Psoas muscle (tissue), 8 donors: ENCODE measurements at regions of chr10 and their contacts with region 1.

Region 1: DNA sequence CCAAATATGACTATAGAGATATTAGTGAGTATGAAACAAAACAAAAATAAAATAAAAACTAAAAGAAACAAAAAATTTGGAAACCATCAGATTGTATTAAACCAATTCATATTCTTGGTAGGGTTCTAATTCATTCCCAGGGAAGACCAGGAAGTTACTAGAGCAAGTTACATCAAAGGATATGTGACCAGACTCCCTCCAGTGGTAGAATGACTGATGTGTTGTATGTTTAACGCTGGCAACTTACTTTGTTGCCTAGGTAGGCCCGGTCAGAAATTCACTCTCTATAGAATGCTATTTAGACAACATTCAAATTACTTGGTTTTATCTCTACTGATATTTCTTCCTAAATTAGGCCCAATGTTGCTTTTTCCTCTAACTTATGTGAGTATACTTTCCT is 5.2 kb downstream of the PHYHIPL start:
- DNase-seq: no peak
- ATAC-seq: peak in 3 of 4 donors; percentile 37 to 72 (median 42)
- H3K4me3 ChIP-seq: no peak overlapping the region
- H3K27ac ChIP-seq: no peak overlapping the region
- H3K4me1 ChIP-seq: no peaks in the 10 kb centered on the region
- H3K27me3 ChIP-seq: peaks cover 0 to 25% (median 2%) of the 10 kb centered on the region in 3 donors
- CTCF ChIP-seq: peak; percentile 54

Region 2: DNA sequence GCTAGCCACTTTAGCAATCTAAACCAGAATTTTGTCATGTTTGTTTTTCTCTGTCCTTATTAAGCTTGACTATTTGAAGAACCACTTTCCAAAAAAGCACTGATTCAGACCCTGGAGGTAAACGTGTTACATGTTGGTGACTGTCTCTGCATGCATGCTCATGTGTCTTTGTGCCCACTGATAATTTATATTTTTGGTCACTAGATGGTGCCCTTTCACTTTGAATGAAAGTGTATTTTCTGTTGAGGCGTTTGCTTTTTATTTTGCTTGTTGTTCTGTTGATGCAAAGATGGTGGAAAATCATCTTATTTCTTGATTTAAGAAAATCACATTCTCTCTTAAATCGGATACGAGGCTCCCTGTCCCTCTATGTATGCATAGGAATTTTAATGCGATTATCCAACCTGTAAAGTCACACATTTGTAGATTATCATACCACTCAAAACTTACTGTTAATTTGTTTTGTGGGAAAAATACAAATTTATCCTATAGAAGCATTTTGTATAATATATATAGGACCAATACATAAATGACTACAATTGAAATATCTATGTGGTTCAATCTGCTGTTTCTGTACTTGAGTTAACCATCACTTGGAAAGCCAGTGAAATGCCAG is 399.7 kb before region 1 on chr10:
- intact Hi-C with region 1: loop called (anchors 5 to 10 kb)
- DNase-seq: no peak
- ATAC-seq: peak in 3 of 4 donors; percentile 41 to 80 (median 66)
- H3K4me3 ChIP-seq: no peak overlapping the region
- H3K27ac ChIP-seq: peak overlapping the region; percentile 42
- H3K4me1 ChIP-seq: peaks cover 3% of the 10 kb centered on the region
- H3K27me3 ChIP-seq: no peaks in the 10 kb centered on the region
- CTCF ChIP-seq: peak; percentile 63

Region 3: DNA sequence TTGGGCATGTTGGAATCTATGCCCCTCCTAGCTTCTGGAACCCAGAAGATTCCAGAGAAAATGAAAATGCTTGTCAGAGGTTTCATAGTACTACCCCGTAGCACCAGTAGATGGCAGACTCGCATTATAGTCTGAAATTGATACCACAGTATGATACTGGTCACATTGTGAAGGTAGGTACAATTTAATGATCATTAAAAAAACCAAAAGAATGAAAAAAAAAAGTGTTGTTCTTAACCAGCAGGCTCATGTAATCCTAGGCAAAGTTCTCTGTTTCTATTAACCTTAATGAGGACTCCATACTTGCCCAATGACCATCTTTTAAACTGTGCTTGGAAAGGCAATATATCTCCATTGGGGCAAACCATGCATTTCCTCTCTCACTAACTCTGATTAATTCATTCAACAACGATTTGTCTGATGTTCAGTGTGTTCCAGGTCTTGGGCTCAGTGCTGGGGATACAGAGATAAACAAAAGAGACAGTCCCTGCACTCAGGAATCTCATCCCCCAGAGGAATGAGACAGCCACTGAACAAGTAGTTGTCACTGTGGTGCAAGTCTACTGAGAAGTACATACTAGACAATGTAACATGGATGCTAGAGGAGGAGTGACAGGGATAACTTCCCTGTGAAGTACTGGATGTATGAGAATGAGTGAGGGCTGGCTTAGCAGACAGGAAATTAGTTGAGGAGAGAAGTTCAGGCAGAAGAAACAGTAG is 228.8 kb before region 1 on chr10:
- intact Hi-C with region 1: loop called (anchors 2 to 5 kb)
- DNase-seq: no peak
- ATAC-seq: peak; percentile 59 to 79 (median 72)
- H3K4me3 ChIP-seq: no peak overlapping the region
- H3K27ac ChIP-seq: peak overlapping the region; percentile 16
- H3K4me1 ChIP-seq: no peaks in the 10 kb centered on the region
- H3K27me3 ChIP-seq: no peaks in the 10 kb centered on the region
- CTCF ChIP-seq: peak; percentile 83